ENCODE measurements at regions of chr6 and their contacts with region 1.

Region 1: GRCh38 chr6:18595774-18596530 is 208.8 kb downstream of the RNF144B start:
- H3K4me3 ChIP-seq: no peak overlapping the region
- H3K27ac ChIP-seq: no peak overlapping the region
- H3K4me1 ChIP-seq: no peaks in the 10 kb centered on the region
- CTCF ChIP-seq: peak; percentile 63

Region 2: DNA sequence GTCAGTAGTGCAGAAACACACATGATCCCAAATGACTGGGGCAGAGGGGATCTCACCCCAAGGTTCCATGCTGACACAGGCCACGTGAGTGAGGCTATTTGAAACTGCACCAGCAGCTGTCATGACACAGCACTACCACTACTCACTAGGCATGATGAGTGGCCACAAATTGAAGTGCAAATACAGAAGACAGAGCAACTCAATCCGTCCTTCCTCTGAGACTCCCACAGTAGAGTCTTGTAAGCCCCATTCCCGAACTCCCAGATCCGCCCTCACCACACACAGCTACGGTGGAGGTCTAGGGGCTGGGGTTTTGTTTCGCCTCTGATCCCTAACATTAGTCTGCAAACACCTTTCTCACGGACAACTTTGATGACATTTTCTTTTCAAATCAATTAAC is 775.9 kb before region 1 on chr6:
- CTCF ChIA-PET with region 1: no interaction called
- POLR2A ChIA-PET with region 1: no interaction called
- H3K4me3 ChIP-seq: no peak overlapping the region
- H3K27ac ChIP-seq: no peak overlapping the region
- H3K4me1 ChIP-seq: no peaks in the 10 kb centered on the region
- CTCF ChIP-seq: no peak

Region 3: GRCh38 chr6:18579869-18580268 is 16.1 kb before region 1 on chr6:
- CTCF ChIA-PET with region 1: interaction called, 13 read pairs
- POLR2A ChIA-PET with region 1: no interaction called
- H3K4me3 ChIP-seq: no peak overlapping the region
- H3K27ac ChIP-seq: no peak overlapping the region
- H3K4me1 ChIP-seq: peaks cover 1% of the 10 kb centered on the region; the same call in 1 of the 2 replicates
- CTCF ChIP-seq: no peak

Region 4: DNA sequence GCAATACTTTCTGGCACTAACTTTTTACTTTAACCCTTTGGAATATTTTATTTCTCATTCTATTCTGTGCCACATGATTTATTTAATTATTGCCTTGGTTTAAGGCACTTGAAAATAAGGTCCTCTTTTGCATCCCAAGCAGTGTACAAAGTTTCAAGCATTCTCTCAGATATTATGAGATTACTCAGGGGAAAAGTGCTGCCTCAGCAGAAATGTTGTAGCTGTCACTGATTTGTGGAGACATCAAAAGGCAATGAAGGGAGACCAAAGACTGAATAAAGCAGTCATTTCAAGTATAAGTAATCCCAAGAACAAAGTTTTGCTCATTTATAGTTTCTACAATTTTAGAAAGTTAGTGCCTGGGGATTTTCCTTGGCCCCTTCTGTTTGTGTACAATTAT is 44.2 kb after region 1 on chr6:
- CTCF ChIA-PET with region 1: no interaction called
- POLR2A ChIA-PET with region 1: no interaction called
- H3K4me3 ChIP-seq: no peak overlapping the region
- H3K27ac ChIP-seq: no peak overlapping the region
- H3K4me1 ChIP-seq: no peaks in the 10 kb centered on the region
- CTCF ChIP-seq: no peak

Region 5: DNA sequence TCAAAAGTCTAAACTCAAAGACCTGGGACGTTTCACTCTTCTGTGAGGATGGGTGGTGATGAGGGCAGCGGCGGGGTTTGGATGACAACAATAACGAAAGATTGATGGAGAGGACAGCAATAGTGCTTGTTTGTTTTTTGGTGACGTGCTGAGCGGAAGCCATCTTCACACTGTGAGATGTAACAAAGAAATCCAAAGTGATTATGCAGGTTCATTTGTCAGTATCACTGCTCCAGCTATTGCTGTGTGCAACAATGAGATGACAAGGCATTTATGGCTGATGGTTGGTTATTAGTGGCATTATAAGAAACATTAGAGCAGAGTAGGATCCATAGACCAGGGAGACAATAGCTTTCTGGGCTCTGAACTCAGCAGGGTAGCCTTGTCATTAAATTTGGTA is 97.9 kb after region 1 on chr6:
- CTCF ChIA-PET with region 1: no interaction called
- POLR2A ChIA-PET with region 1: no interaction called
- H3K4me3 ChIP-seq: no peak overlapping the region
- H3K27ac ChIP-seq: no peak overlapping the region
- H3K4me1 ChIP-seq: no peaks in the 10 kb centered on the region
- CTCF ChIP-seq: no peak

Region 6: GRCh38 chr6:19691465-19692167 is 1095.7 kb after region 1 on chr6:
- CTCF ChIA-PET with region 1: no interaction called
- POLR2A ChIA-PET with region 1: no interaction called
- H3K4me3 ChIP-seq: no peak overlapping the region
- H3K27ac ChIP-seq: no peak overlapping the region
- H3K4me1 ChIP-seq: no peaks in the 10 kb centered on the region
- CTCF ChIP-seq: no peak